Naive thymus-derived CD4-positive, alpha-beta T cell (primary cell): ENCODE measurements at regions of chr9 and their contacts with region 1.

Region 1: GRCh38 chr9:94030318-94031179 is 53.7 kb upstream of the PTPDC1 start:
- DNase-seq: peak; percentile 65 to 86 (median 75)
- ATAC-seq: peak; percentile 100
- H3K4me3 ChIP-seq: peak overlapping the region; percentile 89
- H3K4me3 Mint-ChIP-seq: peak overlapping the region; percentile 93 to 100 (median 98)
- H3K27ac ChIP-seq: peak overlapping the region; percentile 79
- H3K27ac Mint-ChIP-seq: peak overlapping the region; percentile 81 to 99 (median 94)
- H3K4me1 ChIP-seq: peaks cover 0 to 10% of the 10 kb centered on the region in 2 donors
- H3K4me1 Mint-ChIP-seq: peaks cover 10 to 44% (median 38%) of the 10 kb centered on the region in 7 donors
- H3K27me3 ChIP-seq: peaks cover 0 to 6% of the 10 kb centered on the region in 2 donors
- H3K27me3 Mint-ChIP-seq: peaks cover 0 to 15% (median 6%) of the 10 kb centered on the region in 5 donors

Region 2: DNA sequence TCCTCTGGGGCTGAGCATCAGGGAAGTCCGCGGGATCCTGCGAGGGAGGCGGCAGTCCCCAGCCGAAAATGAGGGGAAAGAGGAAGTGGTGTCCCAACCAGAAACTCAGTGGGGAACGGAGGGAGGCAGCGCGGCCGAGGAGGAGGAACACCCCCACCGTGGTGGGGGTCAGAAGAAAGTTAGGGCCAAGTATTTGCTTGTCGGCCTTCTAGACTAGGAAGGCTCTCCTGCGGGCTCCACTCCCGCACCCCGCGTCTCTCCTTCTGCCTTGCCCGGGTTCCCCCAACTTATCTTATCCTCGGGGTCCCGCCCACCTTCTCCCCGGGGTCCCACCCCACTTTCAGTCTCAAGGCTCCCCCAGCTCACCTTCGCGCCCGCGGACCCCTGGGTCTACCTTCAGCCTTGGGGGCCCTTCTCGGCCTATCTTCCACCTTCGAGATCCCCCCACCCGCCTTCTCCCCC is 454.7 kb before region 1 on chr9:
- CTCF ChIA-PET with region 1: no interaction called
- POLR2A ChIA-PET with region 1: no interaction called
- intact Hi-C with region 1: loop called in 1 of 2 experiments (anchors 10 kb)
- DNase-seq: peak in 8 of 9 donors; percentile 30 to 62 (median 44)
- ATAC-seq: peak; percentile 59
- H3K4me3 ChIP-seq: peak overlapping the region; percentile 70
- H3K4me3 Mint-ChIP-seq: peak overlapping the region; percentile 72 to 94 (median 90)
- H3K27ac ChIP-seq: peak overlapping the region; percentile 91
- H3K27ac Mint-ChIP-seq: peak overlapping the region; percentile 72 to 95 (median 93)
- H3K4me1 ChIP-seq: peaks cover 15 to 32% of the 10 kb centered on the region in 2 donors
- H3K4me1 Mint-ChIP-seq: peaks cover 38 to 55% (median 45%) of the 10 kb centered on the region in 7 donors
- H3K27me3 ChIP-seq: no peaks in the 10 kb centered on the region
- H3K27me3 Mint-ChIP-seq: no peaks in the 10 kb centered on the region

Region 3: GRCh38 chr9:94014065-94014654 is 16.4 kb before region 1 on chr9:
- CTCF ChIA-PET with region 1: no interaction called
- POLR2A ChIA-PET with region 1: interaction called, 3 read pairs
- intact Hi-C with region 1: loop called in 1 of 2 experiments (anchors 2 kb)
- DNase-seq: no peak
- ATAC-seq: no peak
- H3K4me3 ChIP-seq: no peak overlapping the region
- H3K4me3 Mint-ChIP-seq: no peak overlapping the region
- H3K27ac ChIP-seq: no peak overlapping the region
- H3K27ac Mint-ChIP-seq: peak overlapping the region in 1 of 9 donors; percentile 23
- H3K4me1 ChIP-seq: peaks cover 0 to 18% of the 10 kb centered on the region in 2 donors
- H3K4me1 Mint-ChIP-seq: peaks cover 4 to 36% (median 25%) of the 10 kb centered on the region in 7 donors
- H3K27me3 ChIP-seq: no peaks in the 10 kb centered on the region
- H3K27me3 Mint-ChIP-seq: peaks cover 0 to 5% (median 3%) of the 10 kb centered on the region in 5 donors